Heart left ventricle (tissue), 16 donors: ENCODE measurements at regions of chrX and their contacts with region 1.

Region 1: GRCh38 chrX:77597090-77597489 is 149.9 kb downstream of the FGF16 start:
- DNase-seq: no peak
- ATAC-seq: no peak
- H3K4me3 ChIP-seq: no peak overlapping the region
- H3K27ac ChIP-seq: no peak overlapping the region
- H3K4me1 ChIP-seq: no peaks in the 10 kb centered on the region
- H3K27me3 ChIP-seq: no peaks in the 10 kb centered on the region
- CTCF ChIP-seq: peak in 9 of 12 donors; percentile 21 to 41 (median 35)
- POLR2A ChIP-seq: no peak

Region 2: GRCh38 chrX:77061545-77061944 is 535.5 kb before region 1 on chrX:
- intact Hi-C with region 1: loop called in 1 of 10 experiments (anchors 10 kb)
- DNase-seq: no peak
- ATAC-seq: peak in 3 of 4 donors; percentile 28 to 54 (median 39)
- H3K4me3 ChIP-seq: no peak overlapping the region
- H3K27ac ChIP-seq: no peak overlapping the region
- H3K4me1 ChIP-seq: no peaks in the 10 kb centered on the region
- H3K27me3 ChIP-seq: peaks cover 0 to 2% (median 0%) of the 10 kb centered on the region in 9 donors
- CTCF ChIP-seq: no peak
- POLR2A ChIP-seq: no peak

Region 3: GRCh38 chrX:77446029-77446585 is 151.0 kb before region 1 on chrX:
- intact Hi-C with region 1: loop called in 2 of 10 experiments (anchors 10 kb)
- DNase-seq: no peak
- ATAC-seq: peak in 1 of 4 donors; percentile 35
- H3K4me3 ChIP-seq: peak overlapping the region in 11 of 12 donors; percentile 0 to 58 (median 45)
- H3K27ac ChIP-seq: no peak overlapping the region
- H3K4me1 ChIP-seq: peaks cover 0 to 12% (median 0%) of the 10 kb centered on the region in 12 donors
- H3K27me3 ChIP-seq: peaks cover 0 to 28% (median 0%) of the 10 kb centered on the region in 9 donors
- CTCF ChIP-seq: peak in 10 of 12 donors; percentile 12 to 45 (median 36)
- POLR2A ChIP-seq: no peak